ENCODE measurements at regions of chr15 and their contacts with region 1.

Region 1: DNA sequence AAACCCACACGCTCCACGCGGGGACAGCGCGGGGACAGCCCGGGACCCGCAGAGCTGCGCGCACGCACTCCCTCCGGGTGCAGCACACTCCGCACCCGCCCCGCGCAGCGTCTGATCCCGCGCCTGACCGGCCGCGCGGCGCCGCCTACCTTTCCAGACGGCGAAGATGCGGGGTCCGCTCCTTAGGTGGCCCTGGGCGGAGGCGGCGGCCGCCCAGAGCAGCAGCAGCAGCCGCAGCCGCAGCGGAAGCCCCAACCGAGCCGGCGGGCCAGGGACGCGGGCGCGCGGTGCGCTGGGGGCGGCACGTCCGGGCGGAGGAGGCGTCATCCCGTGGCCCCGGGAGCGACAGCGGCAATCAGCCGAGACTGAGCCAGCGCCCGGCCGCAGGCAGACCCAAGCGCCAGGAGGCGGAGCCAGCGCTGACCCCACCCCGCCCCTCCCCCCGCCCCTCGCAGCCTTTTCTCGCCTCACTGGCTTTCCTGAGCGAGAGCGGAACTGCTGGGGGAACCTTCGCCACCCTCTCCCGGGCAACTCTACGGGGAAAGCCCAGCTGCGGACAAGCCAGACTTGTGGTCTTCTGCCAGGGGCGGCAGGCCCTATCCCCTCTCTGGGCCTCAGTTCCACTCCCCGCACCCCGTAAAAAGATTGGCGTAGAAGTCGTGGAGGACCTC is at the start of gene SEMA7A:
- DNase-seq: peak; percentile 75
- H3K4me3 ChIP-seq: peak within 1 kb of the TSS; percentile 72 to 90 (median 79)
- H3K27ac ChIP-seq: peak within 1 kb of the TSS; percentile 56
- H3K4me1 ChIP-seq: peaks cover 32% of the 10 kb centered on the region
- H3K27me3 ChIP-seq: no peaks in the 10 kb centered on the region
- CTCF ChIP-seq: no peak
- total RNA-seq, gene SEMA7A: 4.2 to 17.5 TPM

Region 2: GRCh38 chr15:74407055-74407691 is 26.6 kb before region 1 on chr15:
- CTCF ChIA-PET with region 1: no interaction called
- dilution Hi-C with region 1: no loop called
- in situ Hi-C with region 1: no loop called
- intact Hi-C with region 1: loop called (anchors 2 kb)
- DNase-seq: peak; percentile 88
- H3K4me3 ChIP-seq: no peak overlapping the region
- H3K27ac ChIP-seq: peak overlapping the region; percentile 56
- H3K4me1 ChIP-seq: peaks cover 30% of the 10 kb centered on the region
- H3K27me3 ChIP-seq: no peaks in the 10 kb centered on the region
- CTCF ChIP-seq: peak in 1 of 2 donors; percentile 17

Region 3: DNA sequence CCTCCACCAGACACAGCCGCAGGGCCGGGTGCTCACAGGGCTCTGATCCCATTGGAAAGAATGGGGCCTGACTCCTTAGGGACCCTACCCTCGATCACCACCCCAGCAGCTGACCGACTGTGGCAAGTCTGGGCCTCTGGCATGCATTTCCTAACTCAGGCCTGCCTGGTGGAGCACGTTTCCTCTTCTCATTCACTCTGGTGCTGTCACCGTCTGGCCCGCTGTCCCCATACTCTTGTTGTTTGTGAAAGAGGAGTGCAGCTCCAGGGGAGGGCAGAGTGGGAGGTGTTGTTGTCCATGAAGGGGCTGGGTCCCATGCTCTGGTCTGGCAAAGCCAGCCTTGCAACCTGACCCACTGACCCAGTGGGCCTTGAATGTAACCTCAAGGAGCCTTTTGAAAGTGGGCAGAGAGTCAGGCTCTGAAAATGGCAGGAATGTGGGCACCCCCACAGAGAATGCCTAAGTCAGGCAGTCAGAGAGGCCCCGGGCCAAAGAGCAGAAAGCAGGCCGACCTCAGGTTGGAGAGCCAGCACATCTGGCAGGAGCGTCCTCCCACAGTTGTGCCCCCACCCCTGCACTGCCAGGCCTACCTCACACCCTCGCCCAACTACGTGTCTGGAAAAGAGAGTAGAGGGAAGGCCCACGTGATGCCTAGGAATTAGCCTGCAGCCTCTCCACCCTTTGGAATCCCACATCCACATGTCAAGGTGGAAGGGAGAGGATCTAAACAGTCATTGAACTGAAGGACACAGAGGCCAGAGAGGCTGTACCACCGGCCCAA is 10.9 kb before region 1 on chr15:
- CTCF ChIA-PET with region 1: no interaction called
- dilution Hi-C with region 1: no loop called
- in situ Hi-C with region 1: no loop called
- intact Hi-C with region 1: loop called (anchors 1 kb)
- DNase-seq: peak; percentile 83
- H3K4me3 ChIP-seq: no peak overlapping the region
- H3K27ac ChIP-seq: peak overlapping the region; percentile 87
- H3K4me1 ChIP-seq: peaks cover 72% of the 10 kb centered on the region
- H3K27me3 ChIP-seq: no peaks in the 10 kb centered on the region
- CTCF ChIP-seq: no peak

Region 4: GRCh38 chr15:74460871-74461846 is 27.4 kb after region 1 on chr15 and contains the start of gene UBL7:
- CTCF ChIA-PET with region 1: interaction called, 10 read pairs
- dilution Hi-C with region 1: no loop called
- in situ Hi-C with region 1: no loop called
- intact Hi-C with region 1: no loop called
- DNase-seq: peak; percentile 97
- H3K4me3 ChIP-seq: peak within 1 kb of the TSS; percentile 63 to 96 (median 94)
- H3K27ac ChIP-seq: peak within 1 kb of the TSS; percentile 82
- H3K4me1 ChIP-seq: peaks cover 13% of the 10 kb centered on the region
- H3K27me3 ChIP-seq: no peaks in the 10 kb centered on the region
- CTCF ChIP-seq: peak in 1 of 2 donors; percentile 39
- total RNA-seq, gene UBL7: 36.4 to 41.7 TPM

Region 5: GRCh38 chr15:74497584-74497983 is 63.9 kb after region 1 on chr15:
- CTCF ChIA-PET with region 1: no interaction called
- dilution Hi-C with region 1: no loop called
- in situ Hi-C with region 1: no loop called
- intact Hi-C with region 1: no loop called
- DNase-seq: peak; percentile 87
- H3K4me3 ChIP-seq: no peak overlapping the region
- H3K27ac ChIP-seq: no peak overlapping the region
- H3K4me1 ChIP-seq: peaks cover 13% of the 10 kb centered on the region
- H3K27me3 ChIP-seq: no peaks in the 10 kb centered on the region
- CTCF ChIP-seq: no peak

Measured in mammary epithelial cell (primary cell).